CD8-positive, alpha-beta memory T cell (primary cell): ENCODE measurements at regions of chr22 and their contacts with region 1.

Region 1: GRCh38 chr22:38114484-38115398 is 4.3 kb upstream of the BAIAP2L2 start:
- DNase-seq: peak; percentile 55 to 76 (median 62)
- H3K4me3 ChIP-seq: no peak overlapping the region
- H3K4me3 Mint-ChIP-seq: peak overlapping the region in 1 of 7 donors; percentile 78
- H3K27ac ChIP-seq: no peak overlapping the region
- H3K27ac Mint-ChIP-seq: peak overlapping the region in 4 of 8 donors; percentile 29 to 97 (median 76)
- H3K4me1 ChIP-seq: no peaks in the 10 kb centered on the region
- H3K4me1 Mint-ChIP-seq: peaks cover 4% of the 10 kb centered on the region in 3 donors
- H3K27me3 ChIP-seq: no peaks in the 10 kb centered on the region
- H3K27me3 Mint-ChIP-seq: no peaks in the 10 kb centered on the region

Region 2: GRCh38 chr22:38230108-38230825 is 115.5 kb after region 1 on chr22:
- CTCF ChIA-PET with region 1: interaction called, 12 read pairs
- POLR2A ChIA-PET with region 1: no interaction called
- DNase-seq: peak in 4 of 5 donors; percentile 25 to 68 (median 35)
- H3K4me3 ChIP-seq: no peak overlapping the region
- H3K4me3 Mint-ChIP-seq: no peak overlapping the region
- H3K27ac ChIP-seq: no peak overlapping the region
- H3K27ac Mint-ChIP-seq: peak overlapping the region in 3 of 8 donors; percentile 19 to 72 (median 35)
- H3K4me1 ChIP-seq: no peaks in the 10 kb centered on the region
- H3K4me1 Mint-ChIP-seq: peaks cover 0 to 11% (median 4%) of the 10 kb centered on the region in 3 donors
- H3K27me3 ChIP-seq: no peaks in the 10 kb centered on the region
- H3K27me3 Mint-ChIP-seq: no peaks in the 10 kb centered on the region

Region 3: DNA sequence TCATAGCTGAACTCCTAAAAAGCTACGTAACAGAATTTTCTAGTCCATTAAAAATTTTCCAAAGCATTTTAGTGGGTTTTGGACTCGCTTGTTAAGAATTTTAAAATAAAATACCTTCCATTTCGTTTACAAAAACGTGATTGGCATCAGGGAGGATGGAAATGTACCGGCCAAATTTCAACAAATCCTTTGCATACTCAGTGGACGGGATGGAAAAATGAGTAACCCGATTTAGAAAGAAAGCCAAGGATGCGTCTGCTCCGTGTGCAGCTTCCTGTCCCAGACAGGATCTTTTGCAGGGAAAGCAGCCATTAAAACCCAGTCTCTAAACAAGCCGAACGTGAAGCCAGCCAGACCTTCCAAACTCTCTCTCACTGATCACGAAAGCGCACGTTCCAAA is 142.4 kb after region 1 on chr22:
- CTCF ChIA-PET with region 1: no interaction called
- POLR2A ChIA-PET with region 1: no interaction called
- DNase-seq: no peak
- H3K4me3 ChIP-seq: no peak overlapping the region
- H3K4me3 Mint-ChIP-seq: no peak overlapping the region
- H3K27ac ChIP-seq: no peak overlapping the region
- H3K27ac Mint-ChIP-seq: peak overlapping the region in 1 of 8 donors; percentile 72
- H3K4me1 ChIP-seq: no peaks in the 10 kb centered on the region
- H3K4me1 Mint-ChIP-seq: peaks cover 20 to 33% (median 29%) of the 10 kb centered on the region in 3 donors
- H3K27me3 ChIP-seq: no peaks in the 10 kb centered on the region
- H3K27me3 Mint-ChIP-seq: peaks cover 0 to 2% of the 10 kb centered on the region in 2 donors